Transverse colon (tissue), 4 donors: ENCODE measurements at regions of chr16 and their contacts with region 1.

Region 1: GRCh38 chr16:71883849-71884638 is at the start of gene ZNF821:
- DNase-seq: peak; percentile 84
- H3K4me3 ChIP-seq: peak within 1 kb of the TSS; percentile 89 to 98 (median 94)
- H3K27ac ChIP-seq: peak within 1 kb of the TSS; percentile 92 to 95 (median 93)
- H3K4me1 ChIP-seq: peaks cover 0 to 35% (median 11%) of the 10 kb centered on the region in 4 donors
- H3K27me3 ChIP-seq: no peaks in the 10 kb centered on the region
- CTCF ChIP-seq: peak in 4 of 5 experiments; percentile 10 to 54 (median 43)
- EP300 ChIP-seq: no peak
- POLR2A ChIP-seq: no peak
- total RNA-seq, gene ZNF821: 9.4 to 31.6 (median 13.6) TPM

Region 2: GRCh38 chr16:71808593-71809459 is 75.2 kb before region 1 on chr16 and contains the start of gene AP1G1:
- in situ Hi-C with region 1: loop called in 1 of 4 experiments (anchors 10 kb)
- intact Hi-C with region 1: no loop called
- DNase-seq: peak; percentile 96
- H3K4me3 ChIP-seq: peak within 1 kb of the TSS; percentile 94 to 100 (median 96)
- H3K27ac ChIP-seq: peak within 1 kb of the TSS; percentile 95 to 100 (median 100)
- H3K4me1 ChIP-seq: peaks cover 12 to 40% (median 23%) of the 10 kb centered on the region in 4 donors
- H3K27me3 ChIP-seq: no peaks in the 10 kb centered on the region
- CTCF ChIP-seq: no peak
- EP300 ChIP-seq: peak; percentile 43
- POLR2A ChIP-seq: peak; percentile 70
- total RNA-seq, gene AP1G1: 104 to 270 (median 121) TPM

Region 3: GRCh38 chr16:71961066-71962039 is 77.3 kb after region 1 on chr16:
- in situ Hi-C with region 1: no loop called
- intact Hi-C with region 1: loop called (anchors 5 kb)
- DNase-seq: peak; percentile 90
- H3K4me3 ChIP-seq: no peak overlapping the region
- H3K27ac ChIP-seq: no peak overlapping the region
- H3K4me1 ChIP-seq: no peaks in the 10 kb centered on the region
- H3K27me3 ChIP-seq: no peaks in the 10 kb centered on the region
- CTCF ChIP-seq: peak; percentile 73 to 81 (median 76)
- EP300 ChIP-seq: no peak
- POLR2A ChIP-seq: no peak

Region 4: DNA sequence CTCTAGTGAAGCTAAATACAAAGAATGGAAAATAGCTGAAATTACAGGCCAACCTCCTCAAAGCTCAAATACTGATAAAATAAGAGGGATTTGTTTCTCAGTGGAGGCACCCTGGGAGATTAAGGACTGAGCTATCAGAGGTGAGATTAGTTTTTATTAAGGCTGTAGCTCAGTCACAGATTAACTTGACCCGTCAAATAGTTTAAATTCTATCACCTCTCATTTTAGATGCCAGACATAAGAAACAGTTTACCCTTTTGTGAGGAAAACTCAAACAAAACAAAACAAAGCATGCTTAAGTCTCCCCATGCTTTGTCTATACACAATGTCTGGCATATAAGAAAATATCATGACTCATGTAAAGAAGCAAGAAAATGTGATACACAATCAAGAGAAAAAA is 496.2 kb after region 1 on chr16:
- in situ Hi-C with region 1: no loop called
- intact Hi-C with region 1: no loop called
- DNase-seq: no peak
- H3K4me3 ChIP-seq: no peak overlapping the region
- H3K27ac ChIP-seq: no peak overlapping the region
- H3K4me1 ChIP-seq: no peaks in the 10 kb centered on the region
- H3K27me3 ChIP-seq: no peaks in the 10 kb centered on the region
- CTCF ChIP-seq: no peak
- EP300 ChIP-seq: no peak
- POLR2A ChIP-seq: no peak